ENCODE measurements at regions of chr17 and their contacts with region 1.

Region 1: DNA sequence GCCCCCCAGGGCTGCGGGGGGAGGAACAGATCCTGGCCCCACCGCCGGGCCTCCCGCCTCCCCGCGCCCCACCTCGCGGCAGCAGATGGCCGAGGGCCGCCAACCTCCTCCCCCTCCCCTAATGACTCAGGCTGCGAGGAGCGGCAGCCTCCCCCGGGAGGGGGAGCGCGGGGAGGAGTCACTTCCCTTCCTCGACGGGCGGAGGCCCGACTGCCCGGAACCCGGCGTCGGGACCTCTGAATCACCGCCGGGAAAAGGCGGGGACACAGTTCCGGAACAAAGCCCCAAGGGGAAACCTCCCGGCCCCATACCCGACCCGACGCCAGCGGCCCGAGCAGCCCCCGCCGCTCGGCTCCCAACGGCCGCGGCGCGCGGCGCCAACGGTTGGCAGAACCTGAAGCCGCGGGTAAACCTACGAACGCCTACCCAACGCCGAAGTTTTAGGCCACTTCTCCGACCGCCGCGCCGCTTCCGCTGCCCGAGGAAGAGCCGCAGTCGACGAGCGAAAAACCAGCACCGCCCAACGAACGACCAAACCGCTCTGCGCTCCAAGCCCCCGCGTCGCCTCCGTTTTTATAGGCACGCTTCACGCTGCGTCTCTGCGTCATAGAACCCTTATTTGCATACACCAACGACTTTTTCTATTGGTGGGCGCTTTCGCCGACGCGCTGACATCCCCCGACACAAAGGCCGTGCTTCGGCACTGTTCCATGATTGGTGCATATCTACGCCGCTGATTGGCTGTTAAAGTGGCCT is 5.2 kb upstream of the UNK start:
- DNase-seq: peak; percentile 97
- H3K4me3 Mint-ChIP-seq: peak overlapping the region; percentile 89
- H3K27ac Mint-ChIP-seq: peak overlapping the region; percentile 98
- H3K4me1 Mint-ChIP-seq: peaks cover 51% of the 10 kb centered on the region
- H3K27me3 Mint-ChIP-seq: peaks cover 2% of the 10 kb centered on the region

Region 2: GRCh38 chr17:75764711-75765421 is 14.5 kb before region 1 on chr17 and contains the start of gene GALK1:
- CTCF ChIA-PET with region 1: interaction called, 64 read pairs
- POLR2A ChIA-PET with region 1: interaction called, 10 read pairs
- DNase-seq: peak; percentile 76
- H3K4me3 Mint-ChIP-seq: peak within 1 kb of the TSS; percentile 77
- H3K27ac Mint-ChIP-seq: peak within 1 kb of the TSS; percentile 71
- H3K4me1 Mint-ChIP-seq: peaks cover 15% of the 10 kb centered on the region
- H3K27me3 Mint-ChIP-seq: no peaks in the 10 kb centered on the region
- total RNA-seq, gene GALK1: 40.9 to 44.7 TPM

Measured in activated CD4-positive, alpha-beta T cell treated with anti-CD3 and anti-CD28 coated beads, Interleukin-2, amount 10 ng/mL, durations not matched to agents 7 days and 5 days (primary cell).